ENCODE measurements at regions of chr1 and their contacts with region 1.

Region 1: DNA sequence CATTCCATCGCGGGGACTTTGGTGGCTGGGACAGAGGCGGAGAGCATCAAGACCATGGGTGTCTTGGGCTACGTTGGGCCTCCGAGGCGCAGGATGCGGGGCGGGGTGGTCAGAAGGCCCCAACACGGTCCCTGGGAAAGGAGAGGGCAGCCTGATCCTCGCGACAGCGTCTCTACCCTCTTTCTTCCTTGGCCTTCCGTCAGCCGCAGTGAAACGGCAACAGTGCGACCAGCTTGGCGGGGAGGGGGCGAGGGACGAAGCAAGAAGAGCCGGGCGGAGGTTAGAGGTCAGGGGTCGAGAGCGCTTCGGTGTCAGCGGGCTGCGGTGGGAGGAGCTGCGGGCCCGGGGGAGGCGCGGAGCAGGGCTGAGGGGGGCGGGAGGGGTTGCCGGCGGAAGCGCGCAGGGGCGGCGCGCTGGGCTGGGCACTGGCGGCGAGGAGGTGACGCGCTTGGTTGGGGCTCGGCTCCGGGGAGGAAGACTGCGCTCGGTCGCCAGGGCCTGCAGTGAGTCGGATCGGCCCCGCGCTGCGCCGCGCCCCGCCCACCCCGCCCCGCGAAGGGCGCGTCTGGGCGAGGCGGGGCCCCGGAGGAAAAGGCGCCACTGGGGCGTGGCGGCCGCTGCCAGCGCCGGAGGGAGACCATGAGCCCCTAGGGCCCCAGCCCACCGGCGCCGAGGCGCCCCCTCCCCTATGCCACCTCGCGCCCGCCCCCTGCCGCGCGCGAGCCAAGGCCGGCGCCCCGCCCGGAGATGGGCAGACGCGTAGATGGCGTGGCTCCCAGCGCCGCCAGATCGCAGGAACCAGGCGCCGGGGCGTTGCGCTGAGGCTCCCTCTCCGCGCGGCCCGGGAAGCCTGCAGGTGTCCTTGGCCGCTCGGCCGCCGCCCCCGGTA is at the start of gene KCNC4:
- DNase-seq: peak; percentile 91

Region 2: GRCh38 chr1:110196917-110197765 is 12.8 kb before region 1 on chr1:
- CTCF ChIA-PET with region 1: interaction called, 30 read pairs
- POLR2A ChIA-PET with region 1: interaction called, 3 read pairs
- DNase-seq: peak; percentile 93

Region 3: GRCh38 chr1:110298991-110299390 is 89.0 kb after region 1 on chr1:
- CTCF ChIA-PET with region 1: interaction called, 24 read pairs
- POLR2A ChIA-PET with region 1: interaction called, 3 read pairs
- DNase-seq: no peak

Region 4: GRCh38 chr1:110338886-110339406 is 129.0 kb after region 1 on chr1 and contains the start of gene RBM15:
- CTCF ChIA-PET with region 1: interaction called, 18 read pairs
- POLR2A ChIA-PET with region 1: interaction called, 35 read pairs
- DNase-seq: peak; percentile 96